ENCODE measurements at regions of chr5 and their contacts with region 1.

Region 1: GRCh38 chr5:67209142-67209771 is 12.7 kb upstream of the CD180 start:
- DNase-seq: peak; percentile 85
- ATAC-seq: peak; percentile 50
- H3K4me3 ChIP-seq: no peak overlapping the region
- H3K4me3 Mint-ChIP-seq: peak overlapping the region; percentile 62
- H3K27ac ChIP-seq: peak overlapping the region; percentile 9 to 15
- H3K27ac Mint-ChIP-seq: peak overlapping the region; percentile 90
- H3K4me1 ChIP-seq: peaks cover 52% of the 10 kb centered on the region in 2 donors
- H3K4me1 Mint-ChIP-seq: peaks cover 60% of the 10 kb centered on the region
- H3K27me3 ChIP-seq: no peaks in the 10 kb centered on the region
- H3K27me3 Mint-ChIP-seq: no peaks in the 10 kb centered on the region
- CTCF ChIP-seq: peak; percentile 91

Region 2: GRCh38 chr5:66306105-66306843 is 903.0 kb before region 1 on chr5:
- CTCF ChIA-PET with region 1: interaction called, 3 read pairs
- POLR2A ChIA-PET with region 1: no interaction called
- intact Hi-C with region 1: loop called (anchors 5 kb)
- DNase-seq: peak; percentile 58
- ATAC-seq: peak; percentile 75
- H3K4me3 ChIP-seq: no peak overlapping the region
- H3K4me3 Mint-ChIP-seq: no peak overlapping the region
- H3K27ac ChIP-seq: no peak overlapping the region
- H3K27ac Mint-ChIP-seq: no peak overlapping the region
- H3K4me1 ChIP-seq: no peaks in the 10 kb centered on the region
- H3K4me1 Mint-ChIP-seq: no peaks in the 10 kb centered on the region
- H3K27me3 ChIP-seq: peaks cover 0 to 15% (median 2%) of the 10 kb centered on the region in 4 experiments
- H3K27me3 Mint-ChIP-seq: peaks cover 20% of the 10 kb centered on the region
- CTCF ChIP-seq: peak; percentile 84

Region 3: DNA sequence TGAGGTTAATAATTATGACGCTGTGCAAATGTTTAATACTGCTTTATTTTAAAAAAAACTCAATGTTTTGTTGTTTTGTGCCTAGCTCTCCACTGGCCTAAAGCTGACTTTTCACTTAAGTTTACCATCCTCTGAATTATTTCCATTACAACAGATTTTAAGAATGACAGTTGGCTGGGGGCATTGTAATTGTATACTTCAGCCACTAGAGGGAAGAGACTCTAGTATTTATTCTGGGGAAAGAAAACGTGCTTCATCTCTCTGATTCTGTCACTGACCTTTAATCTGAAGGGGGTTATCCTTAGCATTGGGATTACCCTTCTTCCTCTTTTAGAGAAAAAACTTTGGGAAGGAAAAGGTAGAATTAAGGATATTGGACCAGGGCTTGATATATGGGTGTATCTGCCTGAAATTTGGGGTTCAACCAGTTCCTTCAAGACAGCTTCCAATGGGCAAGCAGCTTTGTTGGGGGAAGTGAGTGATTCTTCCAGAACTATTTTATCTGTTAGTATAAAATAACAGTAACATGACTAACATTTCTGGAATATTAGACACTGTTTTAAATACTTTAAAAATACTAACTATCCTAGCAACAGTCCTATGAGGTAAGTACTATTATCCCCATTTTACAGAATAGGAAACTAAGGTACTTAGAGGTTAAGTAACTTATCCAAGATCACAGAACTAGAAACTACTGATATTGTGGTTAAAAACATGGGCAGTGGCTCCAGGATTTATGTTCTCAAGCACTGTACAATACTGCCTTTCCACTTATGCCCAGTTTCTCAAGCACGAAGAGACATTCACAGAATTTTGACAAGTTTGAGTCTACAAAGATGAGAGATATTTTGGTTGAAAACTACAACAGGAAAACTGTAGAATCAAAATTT is 221.1 kb before region 1 on chr5:
- CTCF ChIA-PET with region 1: interaction called, 11 read pairs
- POLR2A ChIA-PET with region 1: no interaction called
- intact Hi-C with region 1: loop called (anchors 1 kb)
- DNase-seq: peak; percentile 43
- ATAC-seq: peak; percentile 58
- H3K4me3 ChIP-seq: no peak overlapping the region
- H3K4me3 Mint-ChIP-seq: no peak overlapping the region
- H3K27ac ChIP-seq: no peak overlapping the region
- H3K27ac Mint-ChIP-seq: no peak overlapping the region
- H3K4me1 ChIP-seq: peaks cover 0 to 2% of the 10 kb centered on the region in 2 donors
- H3K4me1 Mint-ChIP-seq: peaks cover 2% of the 10 kb centered on the region
- H3K27me3 ChIP-seq: no peaks in the 10 kb centered on the region
- H3K27me3 Mint-ChIP-seq: no peaks in the 10 kb centered on the region
- CTCF ChIP-seq: peak; percentile 98

Region 4: GRCh38 chr5:67165526-67166459 is 43.5 kb before region 1 on chr5:
- CTCF ChIA-PET with region 1: interaction called, 582 read pairs
- POLR2A ChIA-PET with region 1: interaction called, 16 read pairs
- intact Hi-C with region 1: loop called (anchors 1 kb)
- DNase-seq: peak; percentile 87
- ATAC-seq: peak; percentile 83
- H3K4me3 ChIP-seq: peak overlapping the region in 4 of 5 experiments; percentile 38 to 63 (median 55)
- H3K4me3 Mint-ChIP-seq: peak overlapping the region; percentile 89
- H3K27ac ChIP-seq: peak overlapping the region; percentile 78 to 83
- H3K27ac Mint-ChIP-seq: peak overlapping the region; percentile 97
- H3K4me1 ChIP-seq: peaks cover 26 to 34% of the 10 kb centered on the region in 2 donors
- H3K4me1 Mint-ChIP-seq: peaks cover 27% of the 10 kb centered on the region
- H3K27me3 ChIP-seq: no peaks in the 10 kb centered on the region
- H3K27me3 Mint-ChIP-seq: no peaks in the 10 kb centered on the region
- CTCF ChIP-seq: peak; percentile 80

Region 5: GRCh38 chr5:67196537-67197059 is 12.7 kb before region 1 on chr5 and contains the start of gene CD180:
- CTCF ChIA-PET with region 1: interaction called, 139 read pairs
- POLR2A ChIA-PET with region 1: interaction called, 19 read pairs
- intact Hi-C with region 1: loop called (anchors 1 kb)
- DNase-seq: peak; percentile 65
- ATAC-seq: peak; percentile 54
- H3K4me3 ChIP-seq: peak within 1 kb of the TSS; percentile 63 to 95 (median 74)
- H3K4me3 Mint-ChIP-seq: peak within 1 kb of the TSS; percentile 91
- H3K27ac ChIP-seq: peak within 1 kb of the TSS; percentile 87 to 98
- H3K27ac Mint-ChIP-seq: peak within 1 kb of the TSS; percentile 97
- H3K4me1 ChIP-seq: peaks cover 60 to 76% of the 10 kb centered on the region in 2 donors
- H3K4me1 Mint-ChIP-seq: peaks cover 96% of the 10 kb centered on the region
- H3K27me3 ChIP-seq: no peaks in the 10 kb centered on the region
- H3K27me3 Mint-ChIP-seq: no peaks in the 10 kb centered on the region
- CTCF ChIP-seq: no peak
- total RNA-seq, gene CD180: 16.4 and 18.0 TPM in 2 replicates